Activated CD8-positive, alpha-beta T cell treated with anti-CD3 and anti-CD28 coated beads for 36 hours (primary cell): ENCODE measurements at regions of chr6 and their contacts with region 1.

Region 1: GRCh38 chr6:41027799-41028628 is 11.0 kb downstream of the UNC5CL start:
- DNase-seq: peak; percentile 81
- ATAC-seq: peak; percentile 92
- H3K4me3 Mint-ChIP-seq: peak overlapping the region; percentile 71
- H3K27ac Mint-ChIP-seq: peak overlapping the region; percentile 76
- H3K4me1 Mint-ChIP-seq: peaks cover 18% of the 10 kb centered on the region
- H3K27me3 Mint-ChIP-seq: no peaks in the 10 kb centered on the region
- CTCF ChIP-seq: peak; percentile 100

Region 2: DNA sequence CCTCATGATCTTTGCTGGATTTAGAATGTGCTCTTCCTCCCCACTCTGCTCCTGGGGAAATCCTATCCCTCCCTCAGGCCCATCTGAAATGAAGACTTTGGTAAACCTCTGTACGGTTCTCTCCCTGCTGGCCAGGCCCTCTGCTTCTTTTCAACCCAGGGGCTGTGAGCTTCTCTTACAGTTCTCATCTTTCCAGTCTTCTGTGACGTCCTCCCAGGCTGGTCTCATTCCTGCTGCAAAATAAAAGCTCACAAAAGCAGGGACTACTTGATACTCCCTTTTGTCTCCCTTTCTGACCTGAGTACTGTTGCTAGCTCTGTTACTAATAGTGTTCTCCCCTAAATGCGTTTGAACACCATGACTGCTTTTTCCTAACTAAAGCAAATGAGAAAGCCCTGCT is 35.3 kb before region 1 on chr6:
- CTCF ChIA-PET with region 1: interaction called, 12 read pairs
- POLR2A ChIA-PET with region 1: no interaction called
- intact Hi-C with region 1: no loop called
- DNase-seq: no peak
- ATAC-seq: no peak
- H3K4me3 Mint-ChIP-seq: no peak overlapping the region
- H3K27ac Mint-ChIP-seq: no peak overlapping the region
- H3K4me1 Mint-ChIP-seq: no peaks in the 10 kb centered on the region
- H3K27me3 Mint-ChIP-seq: peaks cover 23% of the 10 kb centered on the region
- CTCF ChIP-seq: no peak

Region 3: GRCh38 chr6:41008011-41008410 is 20.0 kb before region 1 on chr6:
- CTCF ChIA-PET with region 1: interaction called, 23 read pairs
- POLR2A ChIA-PET with region 1: no interaction called
- intact Hi-C with region 1: no loop called
- DNase-seq: no peak
- ATAC-seq: no peak
- H3K4me3 Mint-ChIP-seq: no peak overlapping the region
- H3K27ac Mint-ChIP-seq: no peak overlapping the region
- H3K4me1 Mint-ChIP-seq: no peaks in the 10 kb centered on the region
- H3K27me3 Mint-ChIP-seq: peaks cover 2% of the 10 kb centered on the region
- CTCF ChIP-seq: no peak

Region 4: DNA sequence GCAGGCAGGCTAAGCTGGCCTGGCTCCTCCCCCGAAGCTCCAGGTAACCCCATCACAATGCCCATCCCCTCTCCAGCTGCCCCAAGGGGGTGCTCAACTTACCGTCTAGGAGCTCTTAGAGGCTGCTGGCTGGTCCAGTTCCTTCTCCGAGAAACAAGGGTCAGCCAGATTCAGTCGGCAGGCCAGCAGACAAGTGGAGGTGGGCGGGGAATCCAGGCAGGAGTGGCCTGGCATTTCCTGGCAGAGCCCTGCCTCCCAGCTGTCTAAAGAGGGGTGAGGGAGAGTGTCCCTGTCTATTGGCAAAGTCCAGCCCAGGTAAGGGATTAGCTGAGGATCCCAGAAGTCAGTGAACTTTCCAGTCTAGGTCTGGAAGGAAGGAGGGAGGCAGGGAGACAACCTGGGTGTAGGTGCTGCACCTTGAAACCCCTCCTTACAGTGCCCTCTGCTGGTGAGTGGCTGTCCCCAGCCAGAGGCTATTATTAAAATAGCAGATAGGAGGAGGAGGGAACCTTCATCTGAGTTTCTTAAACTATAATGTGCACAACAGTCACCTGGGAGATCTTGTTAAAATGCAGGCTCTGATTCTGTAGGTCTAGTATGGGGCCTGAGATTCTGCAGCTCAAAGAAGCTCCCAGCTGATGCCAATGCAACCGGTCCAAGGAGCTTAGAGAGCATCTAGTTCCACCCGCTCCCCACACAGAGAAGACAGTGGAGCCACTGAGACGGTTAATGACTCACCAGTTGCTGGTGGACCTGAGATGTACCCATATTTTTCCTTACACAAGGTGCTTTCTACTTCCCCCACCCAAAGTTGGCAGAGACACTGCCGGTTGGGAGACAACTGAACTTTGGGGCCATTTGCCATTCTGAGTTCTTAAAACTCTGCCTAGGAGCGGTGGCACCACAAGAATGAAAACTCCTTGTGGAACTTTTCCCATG is 11.3 kb after region 1 on chr6 and contains the start of gene UNC5CL:
- CTCF ChIA-PET with region 1: interaction called, 48 read pairs
- POLR2A ChIA-PET with region 1: interaction called, 6 read pairs
- intact Hi-C with region 1: no loop called
- DNase-seq: peak; percentile 73
- ATAC-seq: peak; percentile 77
- H3K4me3 Mint-ChIP-seq: no peak within 1 kb of the TSS
- H3K27ac Mint-ChIP-seq: no peak within 1 kb of the TSS
- H3K4me1 Mint-ChIP-seq: peaks cover 8% of the 10 kb centered on the region
- H3K27me3 Mint-ChIP-seq: no peaks in the 10 kb centered on the region
- CTCF ChIP-seq: peak; percentile 71
- total RNA-seq, gene UNC5CL: 2.3 to 2.6 TPM

Region 5: DNA sequence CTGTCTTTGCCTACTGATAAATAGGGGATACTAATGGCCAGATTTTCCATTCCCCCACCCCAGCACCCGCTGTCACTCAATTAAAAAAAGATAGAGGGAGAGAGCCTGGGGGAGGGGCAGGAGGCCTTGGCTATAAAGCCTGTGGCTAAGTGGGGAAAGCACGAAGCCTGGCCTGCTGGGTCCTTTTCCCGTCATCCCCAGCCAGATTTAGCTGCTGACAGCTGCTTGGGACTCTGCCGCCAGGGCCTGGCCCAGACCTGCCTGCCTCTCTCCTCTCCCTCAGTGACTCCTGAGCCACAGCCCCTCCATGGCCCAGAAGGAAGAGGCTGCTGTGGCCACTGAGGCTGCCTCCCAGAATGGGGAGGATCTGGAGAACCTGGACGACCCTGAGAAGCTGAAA is 25.0 kb after region 1 on chr6 and contains the start of gene APOBEC2:
- CTCF ChIA-PET with region 1: interaction called, 10 read pairs
- POLR2A ChIA-PET with region 1: interaction called, 5 read pairs
- intact Hi-C with region 1: no loop called
- DNase-seq: no peak
- ATAC-seq: no peak
- H3K4me3 Mint-ChIP-seq: no peak within 1 kb of the TSS
- H3K27ac Mint-ChIP-seq: peak within 1 kb of the TSS; percentile 76
- H3K4me1 Mint-ChIP-seq: peaks cover 13% of the 10 kb centered on the region
- H3K27me3 Mint-ChIP-seq: no peaks in the 10 kb centered on the region
- CTCF ChIP-seq: no peak
- total RNA-seq, gene APOBEC2: not detected

Region 6: GRCh38 chr6:41066867-41067304 is 38.9 kb after region 1 on chr6:
- CTCF ChIA-PET with region 1: interaction called, 15 read pairs
- POLR2A ChIA-PET with region 1: interaction called, 3 read pairs
- intact Hi-C with region 1: no loop called
- DNase-seq: peak; percentile 77
- ATAC-seq: no peak
- H3K4me3 Mint-ChIP-seq: no peak overlapping the region
- H3K27ac Mint-ChIP-seq: no peak overlapping the region
- H3K4me1 Mint-ChIP-seq: peaks cover 39% of the 10 kb centered on the region
- H3K27me3 Mint-ChIP-seq: no peaks in the 10 kb centered on the region
- CTCF ChIP-seq: peak; percentile 94